GM18951 (cell line): ENCODE measurements at regions of chr6 and their contacts with region 1.

Region 1: GRCh38 chr6:37691904-37692806 is 5.5 kb downstream of the MDGA1 start:
- POLR2A ChIP-seq: no peak

Region 2: GRCh38 chr6:37324131-37325033 is 367.8 kb before region 1 on chr6:
- in situ Hi-C with region 1: no loop called
- POLR2A ChIP-seq: no peak

Region 3: DNA sequence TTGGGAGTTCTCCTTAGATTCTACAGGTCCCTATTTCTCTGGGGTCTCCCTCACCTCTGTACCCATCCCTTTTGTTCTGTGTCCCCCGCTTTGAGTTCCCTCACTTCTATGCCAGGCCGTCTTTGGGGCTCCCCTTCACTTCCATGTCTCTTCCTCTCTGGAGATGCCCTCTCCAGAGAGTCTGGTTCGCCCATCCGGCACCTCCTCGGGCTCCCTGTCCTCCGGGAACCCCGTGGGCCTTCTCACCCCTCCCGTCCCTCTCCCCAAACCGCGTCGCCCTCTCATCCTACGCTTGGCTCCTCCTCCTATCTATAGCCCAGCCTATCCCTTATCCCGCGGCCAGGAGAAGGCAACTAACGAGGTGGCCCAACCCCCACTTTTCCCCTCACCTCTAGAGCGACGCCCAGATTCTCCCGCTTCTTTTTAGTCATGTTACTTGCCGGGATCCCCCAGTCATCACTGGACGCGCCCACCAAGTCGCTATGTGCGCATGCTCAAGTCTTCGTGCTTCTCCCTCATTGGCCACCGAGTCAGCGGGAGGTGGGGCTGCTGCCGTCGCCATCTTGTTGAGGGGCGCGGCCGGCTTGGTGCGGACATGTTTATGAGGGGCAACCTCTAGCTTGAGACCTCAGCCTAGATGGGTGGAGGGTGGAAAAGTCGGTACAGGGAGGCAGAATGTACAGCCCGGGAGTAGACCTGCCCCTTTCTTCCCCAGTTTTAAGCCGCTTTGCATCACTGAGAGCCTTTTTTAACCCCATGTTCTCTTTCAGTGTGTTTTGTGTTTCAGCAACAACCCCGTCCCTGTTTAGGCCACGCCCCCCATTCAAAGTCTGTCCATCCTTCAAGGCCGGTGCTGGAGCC is 192.5 kb before region 1 on chr6 and contains the start of gene CCDC167:
- in situ Hi-C with region 1: loop called (anchors 25 kb)
- POLR2A ChIP-seq: peak; percentile 54

Region 4: GRCh38 chr6:37589941-37590340 is 102.2 kb before region 1 on chr6:
- in situ Hi-C with region 1: loop called (anchors 10 kb)
- POLR2A ChIP-seq: no peak

Region 5: DNA sequence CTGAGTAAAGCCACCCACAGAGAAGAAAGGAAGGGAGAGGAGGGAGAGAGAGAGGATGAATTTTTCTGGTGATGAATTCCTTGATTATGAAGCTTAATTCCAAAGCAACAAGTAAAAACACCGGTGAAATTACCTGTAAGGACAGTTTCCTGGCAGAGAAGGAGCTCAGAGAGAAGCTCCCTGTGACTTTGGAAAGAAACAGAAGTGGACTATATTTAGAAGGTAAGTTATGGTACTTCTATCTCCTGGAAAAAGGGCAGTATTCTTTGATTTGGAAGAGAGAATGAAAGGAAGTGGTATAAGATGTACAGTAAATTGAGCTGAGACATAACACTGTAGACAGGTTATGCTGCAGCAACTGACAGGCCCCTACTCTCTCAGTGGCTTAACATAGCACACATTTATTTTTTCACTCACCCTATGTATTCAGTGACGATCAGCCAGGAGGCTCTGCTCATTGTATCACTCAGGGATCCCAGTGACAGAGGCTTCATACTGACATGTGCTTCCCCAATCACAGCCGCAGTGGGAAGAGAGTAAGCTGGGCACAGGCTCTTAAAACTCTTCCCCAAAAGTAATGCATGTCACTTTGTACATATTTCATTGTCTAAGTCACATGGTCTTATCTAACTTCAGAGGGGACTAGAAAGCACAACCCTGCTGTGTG is 598.1 kb after region 1 on chr6:
- in situ Hi-C with region 1: no loop called
- POLR2A ChIP-seq: no peak

Region 6: GRCh38 chr6:39184906-39185580 is 1492.9 kb after region 1 on chr6:
- in situ Hi-C with region 1: no loop called
- POLR2A ChIP-seq: no peak